PC-9 (cell line): ENCODE measurements at regions of chrX and their contacts with region 1.

Region 1: DNA sequence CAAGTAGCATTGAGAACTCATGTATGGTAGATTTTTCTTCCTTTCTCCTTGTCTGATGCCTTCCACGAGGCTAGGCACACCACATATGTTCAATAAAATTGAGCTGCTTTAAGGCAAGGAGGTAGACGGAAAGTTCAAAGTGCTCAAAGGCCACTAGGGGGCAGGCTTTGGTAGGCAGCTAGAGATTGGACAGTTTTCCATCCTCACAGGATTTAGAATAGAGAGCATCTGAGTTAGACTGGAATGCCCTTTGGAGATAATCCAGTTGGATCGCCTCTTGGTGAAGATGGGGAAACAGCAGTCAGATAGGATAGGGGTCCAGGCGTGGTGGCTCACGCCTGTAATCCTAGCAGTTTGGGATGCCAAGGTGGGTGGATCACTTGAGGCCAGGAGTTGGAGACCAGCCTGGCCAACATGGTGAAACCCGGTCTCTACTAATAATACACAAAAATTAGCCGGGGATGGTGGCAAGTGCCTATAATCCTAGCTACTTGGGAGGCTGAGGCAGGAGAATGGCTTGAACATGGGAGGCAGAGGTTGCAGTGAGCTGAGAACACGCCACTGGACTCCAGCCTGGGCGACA is 30.4 kb downstream of the ELF4 start:
- DNase-seq: peak; percentile 57 to 67
- H3K4me3 ChIP-seq: no peak overlapping the region
- H3K27ac ChIP-seq: no peak overlapping the region
- H3K4me1 ChIP-seq: peaks cover 4% of the 10 kb centered on the region
- H3K27me3 ChIP-seq: no peaks in the 10 kb centered on the region
- CTCF ChIP-seq: peak; percentile 92

Region 2: DNA sequence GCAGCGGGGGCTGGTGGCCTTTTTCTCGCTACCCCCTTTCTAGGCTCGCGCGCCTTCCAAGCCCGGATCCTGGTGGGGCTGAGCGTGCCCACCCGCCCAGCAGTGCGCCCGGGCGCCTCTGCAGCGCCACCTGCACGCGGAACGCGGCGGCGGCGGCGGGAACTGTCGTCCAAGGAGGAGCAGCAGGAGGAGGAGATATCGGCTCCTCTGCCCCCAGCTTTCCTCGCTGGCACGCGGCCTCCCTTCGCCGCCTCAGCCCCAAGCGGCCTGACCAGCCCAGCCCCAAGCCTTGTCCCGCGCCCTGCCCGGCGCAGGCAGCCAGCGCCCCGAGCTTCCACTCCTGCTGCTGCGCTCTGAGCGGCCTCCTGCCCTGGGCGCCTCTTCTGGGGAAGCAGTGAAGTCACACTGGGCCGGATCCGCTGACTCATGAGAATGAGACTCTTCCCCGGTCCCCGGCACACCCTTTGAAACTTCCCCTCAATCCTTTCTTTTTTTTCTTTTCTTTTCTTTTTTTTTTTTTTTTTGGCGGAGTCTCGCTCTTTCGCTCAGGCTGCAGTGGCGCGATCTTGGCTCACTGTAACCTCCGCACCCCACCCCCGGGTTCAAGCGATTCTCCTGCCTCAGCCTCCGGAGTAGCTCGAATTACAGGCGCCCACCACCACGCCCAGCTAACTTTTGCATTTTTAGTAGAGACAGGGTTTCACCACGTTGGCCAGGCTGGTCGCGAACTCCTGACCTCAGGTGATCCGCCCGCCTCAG is 41.0 kb after region 1 on chrX:
- CTCF ChIA-PET with region 1: no interaction called
- POLR2A ChIA-PET with region 1: no interaction called
- intact Hi-C with region 1: loop called (anchors 2 kb)
- DNase-seq: peak; percentile 71 to 79
- H3K4me3 ChIP-seq: peak overlapping the region; percentile 51; the same call in 1 of the 2 replicates
- H3K27ac ChIP-seq: peak overlapping the region; percentile 66
- H3K4me1 ChIP-seq: peaks cover 75% of the 10 kb centered on the region
- H3K27me3 ChIP-seq: no peaks in the 10 kb centered on the region
- CTCF ChIP-seq: peak; percentile 75

Region 3: GRCh38 chrX:130130990-130131389 is 51.1 kb after region 1 on chrX:
- CTCF ChIA-PET with region 1: interaction called, 18 read pairs
- POLR2A ChIA-PET with region 1: no interaction called
- intact Hi-C with region 1: no loop called
- DNase-seq: no peak
- H3K4me3 ChIP-seq: no peak overlapping the region
- H3K27ac ChIP-seq: no peak overlapping the region
- H3K4me1 ChIP-seq: peaks cover under 1% of the 10 kb centered on the region
- H3K27me3 ChIP-seq: no peaks in the 10 kb centered on the region
- CTCF ChIP-seq: no peak

Region 4: DNA sequence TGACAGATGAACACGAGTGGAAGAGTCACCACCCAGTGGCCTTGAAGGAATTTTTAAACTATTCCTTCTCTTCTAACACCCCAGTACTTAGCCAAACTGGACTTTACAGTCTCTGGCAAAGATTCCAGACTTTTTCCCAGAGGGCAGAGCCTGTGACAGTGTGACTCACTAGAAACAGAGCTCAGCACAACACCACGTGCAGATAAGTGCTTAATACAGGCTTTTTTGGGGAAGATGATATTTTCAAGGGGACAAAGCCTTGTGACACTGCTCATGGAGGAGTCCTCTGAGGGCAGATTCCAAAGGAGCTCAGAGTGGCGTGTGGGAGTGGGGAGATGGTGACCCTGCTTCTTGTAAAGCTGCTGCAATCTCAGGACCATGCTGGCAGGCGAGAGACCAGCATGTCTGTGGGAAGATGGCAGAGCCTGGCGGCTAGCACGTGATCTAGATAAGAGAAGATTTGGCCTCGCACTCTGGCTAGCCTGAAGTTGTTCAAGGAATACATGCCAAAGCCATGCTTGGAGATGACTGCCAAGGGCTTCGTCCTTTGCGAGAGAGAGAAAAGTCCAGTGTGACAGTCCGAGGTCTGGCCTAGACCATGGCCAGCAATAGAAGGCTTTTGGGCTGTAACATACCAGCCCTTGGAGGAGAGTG is 94.3 kb after region 1 on chrX:
- CTCF ChIA-PET with region 1: interaction called, 11 read pairs
- POLR2A ChIA-PET with region 1: no interaction called
- intact Hi-C with region 1: no loop called
- DNase-seq: peak; percentile 11 to 48
- H3K4me3 ChIP-seq: peak overlapping the region; percentile 7; the same call in 1 of the 2 replicates
- H3K27ac ChIP-seq: peak overlapping the region; percentile 97
- H3K4me1 ChIP-seq: peaks cover 28% of the 10 kb centered on the region
- H3K27me3 ChIP-seq: no peaks in the 10 kb centered on the region
- CTCF ChIP-seq: no peak

Region 5: GRCh38 chrX:130196466-130196865 is 116.6 kb after region 1 on chrX:
- CTCF ChIA-PET with region 1: interaction called, 3 read pairs
- POLR2A ChIA-PET with region 1: no interaction called
- intact Hi-C with region 1: loop called (anchors 1 kb)
- DNase-seq: no peak
- H3K4me3 ChIP-seq: no peak overlapping the region
- H3K27ac ChIP-seq: no peak overlapping the region
- H3K4me1 ChIP-seq: no peaks in the 10 kb centered on the region
- H3K27me3 ChIP-seq: no peaks in the 10 kb centered on the region
- CTCF ChIP-seq: no peak